ENCODE measurements at regions of chr7 and their contacts with region 1.

Region 1: GRCh38 chr7:150567169-150567568 is at the start of gene GIMAP4:
- DNase-seq: peak in 4 of 9 donors; percentile 21 to 53 (median 42)
- ATAC-seq: peak; percentile 58
- H3K4me3 ChIP-seq: peak within 1 kb of the TSS; percentile 92
- H3K4me3 Mint-ChIP-seq: peak within 1 kb of the TSS; percentile 87 to 99 (median 96)
- H3K27ac ChIP-seq: peak within 1 kb of the TSS; percentile 84
- H3K27ac Mint-ChIP-seq: peak within 1 kb of the TSS; percentile 92 to 99 (median 97)
- H3K4me1 ChIP-seq: peaks cover 45 to 68% of the 10 kb centered on the region in 2 donors
- H3K4me1 Mint-ChIP-seq: peaks cover 39 to 81% (median 70%) of the 10 kb centered on the region in 7 donors
- H3K27me3 ChIP-seq: no peaks in the 10 kb centered on the region
- H3K27me3 Mint-ChIP-seq: no peaks in the 10 kb centered on the region
- total RNA-seq, gene GIMAP4: 74.9 to 413 (median 406) TPM

Region 2: DNA sequence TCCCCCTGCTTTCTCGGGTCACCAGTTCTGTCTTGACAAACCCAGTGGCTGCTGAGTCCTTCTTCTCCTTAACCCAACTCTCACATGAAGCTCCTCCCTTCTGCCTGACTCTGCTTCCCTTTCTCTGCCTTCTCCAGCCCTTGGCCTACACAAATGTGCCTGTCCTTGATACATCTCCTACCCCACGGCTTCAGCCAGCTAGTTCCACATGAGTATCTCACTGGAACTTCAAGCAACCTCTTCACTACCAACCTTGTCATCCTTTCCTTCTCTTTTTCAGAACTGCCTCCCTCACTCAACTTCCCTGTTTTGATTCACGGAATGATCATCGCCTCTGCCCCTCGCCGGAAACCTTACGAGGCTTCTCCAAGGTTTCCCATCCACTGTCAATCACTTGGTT is 1594.8 kb before region 1 on chr7:
- CTCF ChIA-PET with region 1: no interaction called
- POLR2A ChIA-PET with region 1: no interaction called
- intact Hi-C with region 1: no loop called
- DNase-seq: no peak
- ATAC-seq: peak; percentile 76
- H3K4me3 ChIP-seq: no peak overlapping the region
- H3K4me3 Mint-ChIP-seq: no peak overlapping the region
- H3K27ac ChIP-seq: no peak overlapping the region
- H3K27ac Mint-ChIP-seq: peak overlapping the region in 2 of 9 donors; percentile 76 to 83
- H3K4me1 ChIP-seq: no peaks in the 10 kb centered on the region
- H3K4me1 Mint-ChIP-seq: peaks cover 0 to 6% (median 4%) of the 10 kb centered on the region in 7 donors
- H3K27me3 ChIP-seq: no peaks in the 10 kb centered on the region
- H3K27me3 Mint-ChIP-seq: peaks cover 0 to 4% (median 0%) of the 10 kb centered on the region in 5 donors

Region 3: DNA sequence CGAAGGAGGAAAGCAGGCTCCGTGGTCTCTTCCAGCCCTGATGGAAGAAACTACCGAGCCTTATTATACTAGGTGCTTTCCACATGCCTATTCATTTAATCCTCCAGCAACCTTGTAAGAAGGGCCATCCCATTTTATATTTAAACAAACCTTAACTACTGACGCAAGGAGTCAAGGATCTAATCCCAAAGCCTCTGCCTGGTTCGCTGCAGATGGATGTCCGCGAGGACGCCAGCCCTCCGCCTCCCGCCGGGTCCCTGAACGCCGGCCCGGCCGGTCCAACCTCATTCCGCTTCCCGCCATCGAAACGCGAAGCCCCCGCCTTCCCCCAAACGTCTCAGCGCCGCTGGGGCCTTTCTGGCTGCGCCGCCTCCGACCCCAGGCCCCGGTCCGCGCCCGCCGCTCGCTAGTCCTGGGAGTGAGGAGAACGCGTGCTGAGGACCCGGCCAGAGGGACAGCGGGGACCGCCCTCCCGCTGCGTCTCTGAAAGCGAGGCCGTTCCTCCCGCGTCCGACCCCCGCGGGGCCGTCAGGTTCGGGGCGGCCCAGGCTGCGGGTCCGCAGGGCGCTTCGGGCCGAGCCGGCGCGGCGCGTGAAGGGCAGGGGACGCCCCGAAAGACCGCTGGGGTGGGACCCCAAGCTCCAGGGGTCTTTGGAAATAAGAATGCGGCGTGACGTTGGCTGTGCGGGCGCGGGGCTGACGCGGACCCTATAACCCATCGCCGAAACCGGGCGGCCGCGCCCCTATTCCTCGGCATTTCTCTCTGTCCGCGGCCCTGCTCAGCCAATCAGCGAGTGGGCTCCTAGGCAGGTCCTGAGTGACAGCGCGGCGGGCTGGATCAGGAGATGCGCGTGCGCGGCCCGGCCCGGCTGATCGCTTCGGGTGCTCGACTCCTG is 693.8 kb before region 1 on chr7 and contains the start of gene ATP6V0E2:
- CTCF ChIA-PET with region 1: no interaction called
- POLR2A ChIA-PET with region 1: no interaction called
- intact Hi-C with region 1: no loop called
- DNase-seq: peak; percentile 81 to 92 (median 85)
- ATAC-seq: peak; percentile 84
- H3K4me3 ChIP-seq: peak within 1 kb of the TSS; percentile 76
- H3K4me3 Mint-ChIP-seq: peak within 1 kb of the TSS; percentile 79 to 95 (median 91)
- H3K27ac ChIP-seq: peak within 1 kb of the TSS; percentile 88
- H3K27ac Mint-ChIP-seq: peak within 1 kb of the TSS; percentile 48 to 98 (median 92)
- H3K4me1 ChIP-seq: peaks cover 56% of the 10 kb centered on the region in 2 donors
- H3K4me1 Mint-ChIP-seq: peaks cover 45 to 89% (median 81%) of the 10 kb centered on the region in 7 donors
- H3K27me3 ChIP-seq: no peaks in the 10 kb centered on the region
- H3K27me3 Mint-ChIP-seq: no peaks in the 10 kb centered on the region
- total RNA-seq, gene ATP6V0E2: 32.7 to 84.0 (median 55.4) TPM

Region 4: GRCh38 chr7:150368096-150368883 is 198.9 kb before region 1 on chr7 and contains the start of gene REPIN1:
- CTCF ChIA-PET with region 1: no interaction called
- POLR2A ChIA-PET with region 1: interaction called, 10 read pairs
- intact Hi-C with region 1: no loop called
- DNase-seq: peak; percentile 65 to 88 (median 80)
- ATAC-seq: peak; percentile 74
- H3K4me3 ChIP-seq: peak within 1 kb of the TSS; percentile 99
- H3K4me3 Mint-ChIP-seq: peak within 1 kb of the TSS; percentile 91 to 97 (median 95)
- H3K27ac ChIP-seq: peak within 1 kb of the TSS; percentile 83
- H3K27ac Mint-ChIP-seq: peak within 1 kb of the TSS; percentile 88 to 97 (median 95)
- H3K4me1 ChIP-seq: peaks cover 11 to 39% of the 10 kb centered on the region in 2 donors
- H3K4me1 Mint-ChIP-seq: peaks cover 24 to 67% (median 58%) of the 10 kb centered on the region in 7 donors
- H3K27me3 ChIP-seq: no peaks in the 10 kb centered on the region
- H3K27me3 Mint-ChIP-seq: no peaks in the 10 kb centered on the region
- total RNA-seq, gene REPIN1: 68.5 to 103 (median 79.7) TPM

Region 5: DNA sequence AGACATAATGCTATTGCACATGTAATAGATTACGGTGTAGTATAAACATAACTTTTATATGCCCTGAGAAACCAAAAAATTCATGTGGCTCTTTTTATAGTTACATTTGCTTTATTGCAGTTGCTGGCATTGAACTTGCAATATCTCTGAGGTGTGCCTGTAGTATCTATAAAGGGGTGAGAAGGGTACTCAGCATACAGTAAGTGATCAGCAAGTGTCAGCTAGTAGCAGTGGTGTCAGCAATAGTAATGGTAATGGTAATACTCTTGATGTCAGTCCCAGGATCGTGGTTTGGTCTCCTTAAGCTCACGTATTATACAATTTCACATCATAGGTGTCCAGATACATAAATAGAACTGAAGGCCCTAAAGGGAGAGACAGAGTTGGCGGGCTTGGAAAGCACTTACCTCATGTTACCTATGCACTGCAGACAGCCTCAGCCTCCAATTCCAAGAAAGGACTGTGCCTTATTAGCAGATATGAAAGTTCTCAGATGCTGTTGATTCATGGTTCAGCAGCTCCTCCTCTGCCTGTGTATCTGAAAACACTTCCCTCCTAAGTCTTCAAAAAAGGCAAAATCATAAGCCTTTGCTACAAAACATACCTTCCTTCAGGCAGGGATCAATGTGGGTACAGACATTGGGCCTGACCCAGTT is 59.1 kb before region 1 on chr7:
- CTCF ChIA-PET with region 1: interaction called, 3 read pairs
- POLR2A ChIA-PET with region 1: interaction called, 526 read pairs
- intact Hi-C with region 1: no loop called
- DNase-seq: peak in 1 of 9 donors; percentile 22
- ATAC-seq: peak; percentile 56
- H3K4me3 ChIP-seq: peak overlapping the region; percentile 52
- H3K4me3 Mint-ChIP-seq: peak overlapping the region; percentile 67 to 99 (median 88)
- H3K27ac ChIP-seq: peak overlapping the region; percentile 74
- H3K27ac Mint-ChIP-seq: peak overlapping the region; percentile 92 to 98 (median 95)
- H3K4me1 ChIP-seq: peaks cover 61 to 93% of the 10 kb centered on the region in 2 donors
- H3K4me1 Mint-ChIP-seq: peaks cover 54 to 98% (median 94%) of the 10 kb centered on the region in 7 donors
- H3K27me3 ChIP-seq: no peaks in the 10 kb centered on the region
- H3K27me3 Mint-ChIP-seq: no peaks in the 10 kb centered on the region

Region 6: DNA sequence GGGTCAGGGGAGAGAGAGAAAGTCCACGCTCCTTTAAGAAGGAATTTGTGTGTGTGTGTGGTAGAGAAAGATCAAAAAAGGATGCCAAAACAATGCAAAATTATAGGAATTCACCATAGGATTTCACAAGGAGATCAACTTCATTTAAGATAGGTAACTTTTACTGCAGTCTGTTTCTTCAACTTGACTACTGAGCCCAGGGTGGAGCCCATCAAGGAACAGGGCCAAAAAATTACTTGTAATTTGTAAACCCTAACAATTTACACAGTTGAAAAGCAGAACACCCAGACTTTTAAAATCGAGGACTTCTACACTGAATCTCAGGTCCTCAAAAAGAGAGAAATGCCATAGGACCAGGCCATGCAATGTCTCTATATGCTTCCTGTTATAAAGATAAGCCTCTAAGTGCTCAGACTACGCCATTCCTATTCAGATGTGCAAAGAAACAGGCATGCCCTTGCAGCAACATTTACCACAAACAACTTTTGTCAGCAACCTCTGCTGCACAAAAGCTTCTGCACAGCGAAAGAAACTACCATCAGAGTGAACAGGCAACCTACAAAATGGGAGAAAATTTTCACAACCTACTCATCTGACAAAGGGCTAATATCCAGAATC is 10.5 kb before region 1 on chr7:
- CTCF ChIA-PET with region 1: interaction called, 11 read pairs
- POLR2A ChIA-PET with region 1: interaction called, 182 read pairs
- intact Hi-C with region 1: loop called in 1 of 2 experiments (anchors 1 kb)
- DNase-seq: peak in 7 of 9 donors; percentile 45 to 84 (median 73)
- ATAC-seq: peak; percentile 99
- H3K4me3 ChIP-seq: peak overlapping the region; percentile 42
- H3K4me3 Mint-ChIP-seq: peak overlapping the region; percentile 48 to 92 (median 78)
- H3K27ac ChIP-seq: peak overlapping the region; percentile 66
- H3K27ac Mint-ChIP-seq: peak overlapping the region; percentile 89 to 99 (median 94)
- H3K4me1 ChIP-seq: peaks cover 47 to 74% of the 10 kb centered on the region in 2 donors
- H3K4me1 Mint-ChIP-seq: peaks cover 45 to 95% (median 90%) of the 10 kb centered on the region in 7 donors
- H3K27me3 ChIP-seq: no peaks in the 10 kb centered on the region
- H3K27me3 Mint-ChIP-seq: no peaks in the 10 kb centered on the region

Region 7: GRCh38 chr7:150668472-150668911 is 101.3 kb after region 1 on chr7:
- CTCF ChIA-PET with region 1: interaction called, 4 read pairs
- POLR2A ChIA-PET with region 1: interaction called, 64 read pairs
- intact Hi-C with region 1: loop called (anchors 1 to 2 kb)
- DNase-seq: peak in 8 of 9 donors; percentile 66 to 87 (median 81)
- ATAC-seq: peak; percentile 88
- H3K4me3 ChIP-seq: peak overlapping the region; percentile 30
- H3K4me3 Mint-ChIP-seq: peak overlapping the region; percentile 57 to 85 (median 72)
- H3K27ac ChIP-seq: peak overlapping the region; percentile 78
- H3K27ac Mint-ChIP-seq: peak overlapping the region; percentile 73 to 100 (median 97)
- H3K4me1 ChIP-seq: peaks cover 71 to 86% of the 10 kb centered on the region in 2 donors
- H3K4me1 Mint-ChIP-seq: peaks cover 58 to 99% (median 94%) of the 10 kb centered on the region in 7 donors
- H3K27me3 ChIP-seq: no peaks in the 10 kb centered on the region
- H3K27me3 Mint-ChIP-seq: no peaks in the 10 kb centered on the region

Region 8: DNA sequence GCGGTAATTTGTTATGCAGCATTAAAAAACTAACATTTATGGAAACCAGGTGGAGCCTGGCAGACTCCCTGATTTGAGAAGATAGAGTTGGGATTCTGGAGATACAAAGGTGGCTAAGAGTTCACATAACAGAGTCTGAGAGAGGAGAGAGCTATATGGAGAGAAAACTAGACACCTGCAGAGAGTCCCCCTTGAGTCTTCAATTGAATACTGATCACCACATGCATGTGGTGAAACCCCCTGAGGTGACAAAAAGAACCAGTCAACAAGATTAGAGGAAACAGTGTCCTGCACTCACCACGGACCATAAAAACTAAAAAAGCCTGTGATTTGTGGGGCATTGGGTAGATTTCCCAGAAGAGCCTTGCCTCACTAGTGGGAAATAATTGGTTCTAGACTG is 128.5 kb after region 1 on chr7:
- CTCF ChIA-PET with region 1: interaction called, 7 read pairs
- POLR2A ChIA-PET with region 1: interaction called, 52 read pairs
- intact Hi-C with region 1: no loop called
- DNase-seq: no peak
- ATAC-seq: no peak
- H3K4me3 ChIP-seq: no peak overlapping the region
- H3K4me3 Mint-ChIP-seq: no peak overlapping the region
- H3K27ac ChIP-seq: no peak overlapping the region
- H3K27ac Mint-ChIP-seq: peak overlapping the region in 1 of 9 donors; percentile 26
- H3K4me1 ChIP-seq: peaks cover 0 to 3% of the 10 kb centered on the region in 2 donors
- H3K4me1 Mint-ChIP-seq: peaks cover 0 to 25% (median 13%) of the 10 kb centered on the region in 7 donors
- H3K27me3 ChIP-seq: no peaks in the 10 kb centered on the region
- H3K27me3 Mint-ChIP-seq: no peaks in the 10 kb centered on the region

Region 9: DNA sequence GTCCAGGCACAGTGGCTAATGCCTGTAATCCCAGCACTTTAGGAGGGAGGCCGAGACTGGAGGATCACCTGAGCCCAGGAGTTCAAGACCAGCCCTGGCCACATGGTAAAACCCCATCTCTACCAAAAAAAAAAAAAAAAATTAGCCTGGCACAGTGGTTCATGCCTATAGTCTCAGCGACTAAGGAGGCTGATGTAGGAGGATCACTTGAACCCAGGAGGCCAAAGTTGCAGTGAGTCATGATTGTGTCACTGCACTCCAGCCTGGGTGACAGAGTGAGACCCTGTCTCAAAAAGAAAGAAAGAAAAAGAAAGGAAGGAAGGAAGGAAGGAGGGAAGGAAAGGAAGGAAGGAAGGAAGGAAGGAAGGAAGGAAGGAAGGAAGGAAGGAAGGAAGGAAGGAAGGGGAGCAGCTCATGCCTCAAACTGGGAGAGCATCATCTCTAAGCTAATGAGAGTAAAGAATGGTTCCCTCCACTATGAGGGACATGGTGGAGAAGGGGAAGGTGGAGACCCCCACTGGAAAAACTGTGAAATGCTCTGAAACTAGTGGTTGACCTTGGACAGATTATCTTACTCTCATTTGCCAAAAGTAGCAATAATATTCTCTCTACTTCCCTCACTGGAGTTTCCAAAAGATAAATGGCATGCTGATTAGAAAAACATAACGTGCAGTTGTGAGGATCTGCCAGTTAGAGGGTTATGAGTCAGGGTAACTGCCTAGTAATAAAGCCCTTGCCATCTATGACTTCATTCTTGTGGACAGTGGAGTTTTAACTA is 186.8 kb after region 1 on chr7:
- CTCF ChIA-PET with region 1: interaction called, 23 read pairs
- POLR2A ChIA-PET with region 1: interaction called, 254 read pairs
- intact Hi-C with region 1: loop called (anchors 1 kb)
- DNase-seq: peak in 1 of 9 donors; percentile 36
- ATAC-seq: no peak
- H3K4me3 ChIP-seq: no peak overlapping the region
- H3K4me3 Mint-ChIP-seq: peak overlapping the region; percentile 30 to 83 (median 68)
- H3K27ac ChIP-seq: peak overlapping the region; percentile 60
- H3K27ac Mint-ChIP-seq: peak overlapping the region; percentile 88 to 97 (median 95)
- H3K4me1 ChIP-seq: peaks cover 44 to 70% of the 10 kb centered on the region in 2 donors
- H3K4me1 Mint-ChIP-seq: peaks cover 36 to 81% (median 78%) of the 10 kb centered on the region in 7 donors
- H3K27me3 ChIP-seq: no peaks in the 10 kb centered on the region
- H3K27me3 Mint-ChIP-seq: peaks cover 0 to 2% (median 0%) of the 10 kb centered on the region in 5 donors

Region 10: GRCh38 chr7:150898475-150899011 is 331.4 kb after region 1 on chr7:
- CTCF ChIA-PET with region 1: no interaction called
- POLR2A ChIA-PET with region 1: no interaction called
- intact Hi-C with region 1: no loop called
- DNase-seq: peak; percentile 44 to 81 (median 70)
- ATAC-seq: peak; percentile 84
- H3K4me3 ChIP-seq: no peak overlapping the region
- H3K4me3 Mint-ChIP-seq: peak overlapping the region in 1 of 10 donors; percentile 19
- H3K27ac ChIP-seq: no peak overlapping the region
- H3K27ac Mint-ChIP-seq: peak overlapping the region in 1 of 9 donors; percentile 34
- H3K4me1 ChIP-seq: no peaks in the 10 kb centered on the region
- H3K4me1 Mint-ChIP-seq: peaks cover 0 to 11% (median 5%) of the 10 kb centered on the region in 7 donors
- H3K27me3 ChIP-seq: no peaks in the 10 kb centered on the region
- H3K27me3 Mint-ChIP-seq: peaks cover 32 to 66% (median 60%) of the 10 kb centered on the region in 5 donors

Measured in naive thymus-derived CD4-positive, alpha-beta T cell (primary cell).